ENCODE measurements at regions of chr1 and their contacts with region 1.

Region 1: GRCh38 chr1:70205434-70206118 is at the start of gene LRRC40:
- DNase-seq: peak; percentile 84
- ATAC-seq: peak; percentile 83
- H3K4me3 ChIP-seq: peak within 1 kb of the TSS; percentile 83
- H3K27ac ChIP-seq: peak within 1 kb of the TSS; percentile 74
- H3K4me1 ChIP-seq: peaks cover 11% of the 10 kb centered on the region
- H3K27me3 ChIP-seq: no peaks in the 10 kb centered on the region
- CTCF ChIP-seq: no peak
- EP300 ChIP-seq: no peak
- POLR2A ChIP-seq: peak; percentile 82
- RAD21 ChIP-seq: no peak
- polyA plus RNA-seq, gene LRRC40: 26.1 to 44.3 TPM

Region 2: GRCh38 chr1:69433073-69433472 is 772.5 kb before region 1 on chr1:
- CTCF ChIA-PET with region 1: no interaction called
- POLR2A ChIA-PET with region 1: no interaction called
- RAD21 ChIA-PET with region 1: no interaction called
- SMC1A ChIA-PET with region 1: no interaction called
- in situ Hi-C with region 1: no loop called
- intact Hi-C with region 1: no loop called
- DNase-seq: no peak
- ATAC-seq: no peak
- H3K4me3 ChIP-seq: no peak overlapping the region
- H3K27ac ChIP-seq: no peak overlapping the region
- H3K4me1 ChIP-seq: no peaks in the 10 kb centered on the region
- H3K27me3 ChIP-seq: no peaks in the 10 kb centered on the region
- CTCF ChIP-seq: no peak
- EP300 ChIP-seq: no peak
- POLR2A ChIP-seq: no peak
- RAD21 ChIP-seq: no peak

Region 3: GRCh38 chr1:70354332-70355110 is 148.9 kb after region 1 on chr1 and contains the start of gene ANKRD13C:
- CTCF ChIA-PET with region 1: interaction called, 3 read pairs
- POLR2A ChIA-PET with region 1: interaction called, 5 read pairs
- RAD21 ChIA-PET with region 1: interaction called, 5 read pairs
- SMC1A ChIA-PET with region 1: interaction called, 3 read pairs
- in situ Hi-C with region 1: no loop called
- intact Hi-C with region 1: loop called (anchors 5 kb)
- DNase-seq: peak; percentile 83
- ATAC-seq: peak; percentile 89
- H3K4me3 ChIP-seq: peak within 1 kb of the TSS; percentile 88
- H3K27ac ChIP-seq: peak within 1 kb of the TSS; percentile 90
- H3K4me1 ChIP-seq: peaks cover 12% of the 10 kb centered on the region; the same call in 1 of the 2 replicates
- H3K27me3 ChIP-seq: no peaks in the 10 kb centered on the region
- CTCF ChIP-seq: peak in 2 of 3 experiments; percentile 7 to 26; a peak in 1 of 6 replicates
- EP300 ChIP-seq: 0 out of 4 replicates have a peak, but pooled peaks of 1 of the 2 experiments have one; percentile 11
- POLR2A ChIP-seq: peak; percentile 97
- RAD21 ChIP-seq: no peak
- polyA plus RNA-seq, gene ANKRD13C: 3.7 to 5.1 TPM

Region 4: DNA sequence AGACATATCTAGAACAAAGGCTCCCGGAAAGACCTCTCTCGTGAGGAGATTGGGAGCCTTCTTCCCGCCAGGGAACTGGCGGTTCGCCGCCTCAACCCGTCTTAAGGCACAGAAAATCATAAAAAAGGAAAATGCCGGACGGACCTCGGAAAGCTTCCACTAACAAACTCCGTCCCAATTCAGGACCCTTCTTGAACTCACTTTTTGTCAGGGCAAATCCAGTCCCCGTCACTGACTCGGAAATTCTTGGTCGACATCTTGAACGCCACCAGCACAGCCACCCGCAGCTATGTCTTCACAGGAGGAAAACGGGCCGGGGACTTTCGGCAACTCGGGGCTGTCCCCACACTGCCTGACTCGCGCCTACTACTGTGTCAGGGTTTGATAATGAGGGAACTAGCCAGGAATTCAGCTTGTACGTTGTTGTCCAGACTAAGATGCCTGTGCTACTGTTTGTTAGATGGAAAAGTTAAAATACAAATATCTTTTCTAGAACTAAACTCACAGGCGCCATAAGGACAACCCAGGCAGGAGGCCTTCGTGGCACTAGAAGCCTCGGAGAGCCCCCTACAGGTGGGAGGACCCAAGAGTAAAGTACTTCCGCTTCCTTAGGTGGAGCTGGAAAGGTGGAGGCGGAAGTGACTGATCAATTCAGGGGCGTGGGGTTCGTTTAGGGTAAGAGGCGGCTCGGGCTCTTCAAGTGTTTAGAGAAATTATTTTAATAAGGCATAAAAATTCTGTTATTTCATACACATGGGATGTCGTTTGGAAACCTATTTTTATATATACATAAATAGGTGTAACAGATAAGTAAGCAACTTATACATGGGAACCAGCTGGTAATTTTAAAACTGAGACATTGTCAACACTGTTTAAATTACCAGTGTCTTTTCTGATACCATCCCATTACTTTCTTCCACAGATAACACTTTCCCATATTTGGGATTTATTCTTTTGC is 875.4 kb after region 1 on chr1 and contains the start of gene ZRANB2:
- CTCF ChIA-PET with region 1: no interaction called
- POLR2A ChIA-PET with region 1: no interaction called
- RAD21 ChIA-PET with region 1: no interaction called
- SMC1A ChIA-PET with region 1: no interaction called
- in situ Hi-C with region 1: no loop called
- intact Hi-C with region 1: loop called (anchors 2 kb)
- DNase-seq: peak; percentile 88
- ATAC-seq: peak; percentile 97
- H3K4me3 ChIP-seq: peak within 1 kb of the TSS; percentile 100
- H3K27ac ChIP-seq: peak within 1 kb of the TSS; percentile 97
- H3K4me1 ChIP-seq: no peaks in the 10 kb centered on the region
- H3K27me3 ChIP-seq: no peaks in the 10 kb centered on the region
- CTCF ChIP-seq: peak; percentile 54 to 64 (median 61)
- EP300 ChIP-seq: peak in 1 of 2 experiments; percentile 63
- POLR2A ChIP-seq: peak; percentile 95
- RAD21 ChIP-seq: no peak
- polyA plus RNA-seq, gene ZRANB2: 148 to 156 TPM

Measured in GM12878 (cell line).